HCT116 (cell line): ENCODE measurements at regions of chr16 and their contacts with region 1.

Region 1: DNA sequence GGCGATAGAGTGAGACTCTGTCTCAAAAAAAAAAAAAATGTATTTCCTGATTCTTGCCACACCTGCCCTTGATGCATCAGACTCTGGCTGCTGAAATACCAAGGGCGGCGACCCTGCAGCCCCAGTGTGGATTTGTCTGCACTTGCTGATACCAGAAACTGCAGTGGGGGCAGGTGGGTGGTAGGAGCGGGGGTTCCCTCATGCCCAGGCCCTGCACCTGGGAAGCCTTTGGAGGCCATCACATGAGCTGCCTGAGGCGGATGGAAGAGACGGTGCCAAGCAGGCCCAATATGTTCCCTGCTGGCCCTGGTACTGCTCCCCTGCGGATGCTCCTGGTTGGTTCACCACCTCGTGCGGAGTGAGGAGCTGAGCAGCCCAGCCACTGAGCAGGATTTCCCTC is 50.6 kb downstream of the MARF1 start:
- DNase-seq: no peak
- ATAC-seq: no peak
- H3K4me3 ChIP-seq: no peak overlapping the region
- H3K27ac ChIP-seq: peak overlapping the region; percentile 89
- H3K4me1 ChIP-seq: peaks cover 44 to 70% of the 10 kb centered on the region in 2 experiments
- H3K27me3 ChIP-seq: no peaks in the 10 kb centered on the region
- CTCF ChIP-seq: no peak
- POLR2A ChIP-seq: no peak
- RAD21 ChIP-seq: no peak

Region 2: GRCh38 chr16:15482068-15482747 is 110.1 kb before region 1 on chr16:
- CTCF ChIA-PET with region 1: no interaction called
- POLR2A ChIA-PET with region 1: interaction called, 5 read pairs
- RAD21 ChIA-PET with region 1: no interaction called
- intact Hi-C with region 1: loop called (anchors 5 kb)
- DNase-seq: peak; percentile 99
- ATAC-seq: peak; percentile 99
- H3K4me3 ChIP-seq: peak overlapping the region in 1 of 2 experiments; percentile 11; a peak in 2 of 4 replicates
- H3K27ac ChIP-seq: peak overlapping the region; percentile 87
- H3K4me1 ChIP-seq: peaks cover 19 to 69% of the 10 kb centered on the region in 2 experiments
- H3K27me3 ChIP-seq: no peaks in the 10 kb centered on the region
- CTCF ChIP-seq: peak in 2 of 3 experiments; percentile 10 to 13; a peak in 2 of 6 replicates
- POLR2A ChIP-seq: peak; percentile 70
- RAD21 ChIP-seq: peak; percentile 54; the same call in 1 of the 2 replicates

Region 3: DNA sequence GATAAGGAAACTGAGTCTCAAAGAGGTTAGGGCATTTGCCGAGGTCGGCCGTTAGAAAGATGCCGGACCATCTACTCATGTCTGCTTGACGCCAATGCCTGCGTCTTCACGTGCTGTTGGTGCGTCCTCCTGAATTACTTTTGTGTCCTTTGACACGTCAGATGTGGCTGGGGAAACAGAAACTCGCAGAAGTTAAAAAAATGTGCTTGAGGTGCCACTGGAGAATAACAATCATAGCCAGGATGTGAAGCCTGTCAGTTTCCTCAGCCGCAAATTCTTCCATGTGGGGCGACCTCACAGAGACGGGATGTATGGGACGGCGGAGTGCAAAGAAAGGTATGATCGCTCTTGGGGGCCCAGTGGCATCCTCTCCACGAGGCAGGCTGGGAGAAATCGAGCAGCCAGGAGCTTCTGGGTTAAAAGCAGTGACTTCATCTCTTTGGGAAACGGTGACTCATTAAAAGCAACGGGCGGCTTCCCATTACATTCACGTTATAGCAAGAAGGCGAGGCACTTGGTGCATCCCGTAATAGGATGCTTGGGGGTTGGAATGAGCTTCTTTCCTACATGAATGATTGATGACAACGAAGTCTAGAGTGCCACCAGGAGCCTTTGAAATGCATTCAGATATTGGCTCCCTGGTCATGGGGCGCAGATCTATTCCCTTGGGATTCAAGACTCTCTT is 90.1 kb before region 1 on chr16:
- CTCF ChIA-PET with region 1: no interaction called
- POLR2A ChIA-PET with region 1: interaction called, 4 read pairs
- RAD21 ChIA-PET with region 1: no interaction called
- intact Hi-C with region 1: loop called (anchors 2 kb)
- DNase-seq: peak; percentile 95
- ATAC-seq: peak; percentile 82
- H3K4me3 ChIP-seq: peak overlapping the region in 1 of 2 experiments; percentile 41; a peak in 2 of 4 replicates
- H3K27ac ChIP-seq: peak overlapping the region; percentile 62
- H3K4me1 ChIP-seq: peaks cover 31 to 72% of the 10 kb centered on the region in 2 experiments
- H3K27me3 ChIP-seq: no peaks in the 10 kb centered on the region
- CTCF ChIP-seq: no peak
- POLR2A ChIP-seq: peak; percentile 42
- RAD21 ChIP-seq: peak; percentile 39; the same call in 1 of the 2 replicates

Region 4: GRCh38 chr16:15548482-15548891 is 43.8 kb before region 1 on chr16:
- CTCF ChIA-PET with region 1: no interaction called
- POLR2A ChIA-PET with region 1: interaction called, 3 read pairs
- RAD21 ChIA-PET with region 1: interaction called, 3 to 4 read pairs
- intact Hi-C with region 1: loop called (anchors 2 kb)
- DNase-seq: no peak
- ATAC-seq: no peak
- H3K4me3 ChIP-seq: no peak overlapping the region
- H3K27ac ChIP-seq: peak overlapping the region; percentile 10; the same call in 1 of the 2 replicates
- H3K4me1 ChIP-seq: peaks cover 11 to 66% of the 10 kb centered on the region in 2 experiments
- H3K27me3 ChIP-seq: no peaks in the 10 kb centered on the region
- CTCF ChIP-seq: no peak
- POLR2A ChIP-seq: no peak
- RAD21 ChIP-seq: no peak

Region 5: GRCh38 chr16:15643048-15643945 is 51.0 kb after region 1 on chr16 and contains the start of gene MARF1:
- CTCF ChIA-PET with region 1: no interaction called
- POLR2A ChIA-PET with region 1: interaction called, 18 read pairs
- RAD21 ChIA-PET with region 1: interaction called in 1 of 2 experiments, 3 read pairs
- intact Hi-C with region 1: loop called (anchors 2 kb)
- DNase-seq: peak; percentile 87
- ATAC-seq: peak; percentile 74
- H3K4me3 ChIP-seq: peak within 1 kb of the TSS; percentile 72 to 76
- H3K27ac ChIP-seq: peak within 1 kb of the TSS; percentile 88
- H3K4me1 ChIP-seq: peaks cover 33 to 50% of the 10 kb centered on the region in 2 experiments
- H3K27me3 ChIP-seq: no peaks in the 10 kb centered on the region
- CTCF ChIP-seq: peak in 2 of 3 experiments; percentile 40 to 44; a peak in 4 of 6 replicates
- POLR2A ChIP-seq: peak; percentile 76
- RAD21 ChIP-seq: peak; percentile 27; the same call in 1 of the 2 replicates
- total RNA-seq, gene MARF1: 59.4 TPM